Activated CD8-positive, alpha-beta memory T cell treated with anti-CD3 and anti-CD28 coated beads, Interleukin-2, amount 10 ng/mL, durations not matched to agents 7 days and 5 days (primary cell): ENCODE measurements at regions of chr2 and their contacts with region 1.

Region 1: GRCh38 chr2:98771721-98772524 is 41.0 kb upstream of the MGAT4A start:
- DNase-seq: peak; percentile 83
- ATAC-seq: peak; percentile 70
- H3K4me3 Mint-ChIP-seq: peak overlapping the region; percentile 86
- H3K27ac Mint-ChIP-seq: peak overlapping the region; percentile 95
- H3K4me1 Mint-ChIP-seq: peaks cover 60% of the 10 kb centered on the region
- H3K27me3 Mint-ChIP-seq: no peaks in the 10 kb centered on the region

Region 2: GRCh38 chr2:98736464-98736889 is 35.4 kb before region 1 on chr2:
- CTCF ChIA-PET with region 1: interaction called, 24 read pairs
- DNase-seq: peak; percentile 62
- ATAC-seq: peak; percentile 66
- H3K4me3 Mint-ChIP-seq: peak overlapping the region; percentile 23
- H3K27ac Mint-ChIP-seq: peak overlapping the region; percentile 76
- H3K4me1 Mint-ChIP-seq: peaks cover 63% of the 10 kb centered on the region
- H3K27me3 Mint-ChIP-seq: no peaks in the 10 kb centered on the region

Region 3: DNA sequence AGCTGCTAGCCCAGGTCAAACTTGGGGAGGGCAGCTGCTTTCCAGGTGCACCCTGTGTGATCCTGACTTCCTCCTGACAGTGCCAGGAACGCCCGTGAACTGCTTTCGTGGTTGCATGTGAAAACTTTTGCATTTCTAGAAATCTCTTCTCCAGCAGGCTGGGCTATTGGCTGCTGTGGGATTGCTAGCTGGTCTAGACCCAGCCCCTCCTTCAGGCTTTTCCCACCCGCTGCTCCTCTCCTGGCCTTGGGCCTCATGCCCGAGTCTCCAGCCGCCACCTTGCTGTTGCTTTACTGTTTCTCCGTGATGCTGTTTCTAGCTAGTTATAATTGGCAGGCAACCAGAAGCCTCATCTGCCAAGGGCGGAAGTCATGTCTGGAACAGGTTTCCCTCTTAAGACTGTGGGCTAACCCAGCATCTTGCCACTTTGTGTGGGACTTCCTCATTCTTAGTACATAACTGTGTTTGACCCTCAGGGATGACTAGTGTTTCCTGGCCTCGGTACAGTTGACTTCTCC is 14.0 kb before region 1 on chr2:
- CTCF ChIA-PET with region 1: interaction called, 17 read pairs
- DNase-seq: peak; percentile 79
- ATAC-seq: peak; percentile 83
- H3K4me3 Mint-ChIP-seq: peak overlapping the region; percentile 35
- H3K27ac Mint-ChIP-seq: peak overlapping the region; percentile 78
- H3K4me1 Mint-ChIP-seq: peaks cover 53% of the 10 kb centered on the region
- H3K27me3 Mint-ChIP-seq: no peaks in the 10 kb centered on the region